ENCODE measurements at regions of chr5 and their contacts with region 1.

Region 1: GRCh38 chr5:123423278-123424149 is at the start of gene CEP120:
- DNase-seq: peak; percentile 94 to 99 (median 98)
- H3K4me3 ChIP-seq: peak within 1 kb of the TSS; percentile 58 to 97 (median 85)
- H3K27ac ChIP-seq: peak within 1 kb of the TSS in 58 of 59 donors; percentile 18 to 96 (median 85)
- H3K27me3 ChIP-seq: no peaks in the 10 kb centered on the region
- CTCF ChIP-seq: peak; percentile 28 to 96 (median 83)
- total RNA-seq, gene CEP120: 11.8 to 32.6 (median 21.2) TPM

Region 2: DNA sequence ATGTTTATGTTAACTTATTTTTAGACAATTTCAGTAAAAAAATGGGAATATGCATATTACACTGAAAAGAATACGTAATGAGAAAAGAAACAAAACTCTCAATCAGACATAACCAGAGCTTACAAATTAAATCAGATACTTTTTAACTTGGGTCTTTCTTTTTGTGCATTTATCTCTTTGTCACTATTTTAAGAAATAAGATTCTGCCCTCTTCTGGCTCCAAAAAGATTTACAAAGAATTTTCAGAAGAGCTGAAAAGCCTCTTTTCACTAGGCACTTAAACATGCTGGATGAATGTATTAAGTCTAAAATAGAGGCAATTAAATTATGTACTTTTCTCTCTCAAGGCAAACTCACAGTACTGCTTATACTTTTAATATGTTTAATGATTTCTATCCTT is 55.8 kb before region 1 on chr5:
- intact Hi-C with region 1: no loop called
- DNase-seq: no peak
- H3K4me3 ChIP-seq: no peak overlapping the region
- H3K27ac ChIP-seq: no peak overlapping the region
- H3K27me3 ChIP-seq: no peaks in the 10 kb centered on the region
- CTCF ChIP-seq: peak in 48 of 56 donors; percentile 11 to 69 (median 40)

Region 3: GRCh38 chr5:123610665-123611405 is 187.3 kb after region 1 on chr5:
- intact Hi-C with region 1: loop called in 1 of 2 experiments (anchors 5 kb)
- DNase-seq: peak in 1 of 10 donors; percentile 13
- H3K4me3 ChIP-seq: no peak overlapping the region
- H3K27ac ChIP-seq: peak overlapping the region in 1 of 59 donors; percentile 16
- H3K27me3 ChIP-seq: no peaks in the 10 kb centered on the region
- CTCF ChIP-seq: peak; percentile 85 to 99 (median 95)

Measured in dorsolateral prefrontal cortex (tissue), 120 donors.